ENCODE measurements at regions of chr14 and their contacts with region 1.

Region 1: GRCh38 chr14:21978184-21978998 is 304.8 kb upstream of the OR4E1 start:
- DNase-seq: peak; percentile 41
- H3K4me3 ChIP-seq: no peak overlapping the region
- H3K27ac ChIP-seq: no peak overlapping the region
- H3K4me1 ChIP-seq: no peaks in the 10 kb centered on the region
- H3K27me3 ChIP-seq: peaks cover 7 to 10% of the 10 kb centered on the region in 2 experiments
- CTCF ChIP-seq: peak; percentile 78 to 87
- POLR2A ChIP-seq: no peak

Region 2: GRCh38 chr14:21668377-21668776 is 310.0 kb before region 1 on chr14:
- CTCF ChIA-PET with region 1: no interaction called
- POLR2A ChIA-PET with region 1: no interaction called
- dilution Hi-C with region 1: no loop called
- intact Hi-C with region 1: no loop called
- DNase-seq: peak; percentile 64
- H3K4me3 ChIP-seq: no peak overlapping the region
- H3K27ac ChIP-seq: peak overlapping the region; percentile 13
- H3K4me1 ChIP-seq: peaks cover 10% of the 10 kb centered on the region
- H3K27me3 ChIP-seq: no peaks in the 10 kb centered on the region
- CTCF ChIP-seq: no peak
- POLR2A ChIP-seq: no peak

Region 3: GRCh38 chr14:21860172-21860571 is 118.2 kb before region 1 on chr14:
- CTCF ChIA-PET with region 1: interaction called, 16 read pairs
- POLR2A ChIA-PET with region 1: no interaction called
- dilution Hi-C with region 1: no loop called
- intact Hi-C with region 1: no loop called
- DNase-seq: peak; percentile 58
- H3K4me3 ChIP-seq: no peak overlapping the region
- H3K27ac ChIP-seq: no peak overlapping the region
- H3K4me1 ChIP-seq: no peaks in the 10 kb centered on the region
- H3K27me3 ChIP-seq: peaks cover 11 to 12% of the 10 kb centered on the region in 2 experiments
- CTCF ChIP-seq: peak; percentile 48 to 61
- POLR2A ChIP-seq: no peak

Region 4: GRCh38 chr14:21924479-21924878 is 53.9 kb before region 1 on chr14:
- CTCF ChIA-PET with region 1: interaction called, 74 read pairs
- POLR2A ChIA-PET with region 1: no interaction called
- dilution Hi-C with region 1: no loop called
- intact Hi-C with region 1: loop called (anchors 2 kb)
- DNase-seq: peak; percentile 43
- H3K4me3 ChIP-seq: no peak overlapping the region
- H3K27ac ChIP-seq: peak overlapping the region; percentile 84
- H3K4me1 ChIP-seq: peaks cover 18% of the 10 kb centered on the region
- H3K27me3 ChIP-seq: no peaks in the 10 kb centered on the region
- CTCF ChIP-seq: no peak
- POLR2A ChIP-seq: no peak

Region 5: GRCh38 chr14:21965042-21965441 is 13.3 kb before region 1 on chr14:
- CTCF ChIA-PET with region 1: interaction called, 24 read pairs
- POLR2A ChIA-PET with region 1: no interaction called
- dilution Hi-C with region 1: no loop called
- intact Hi-C with region 1: no loop called
- DNase-seq: no peak
- H3K4me3 ChIP-seq: no peak overlapping the region
- H3K27ac ChIP-seq: no peak overlapping the region
- H3K4me1 ChIP-seq: no peaks in the 10 kb centered on the region
- H3K27me3 ChIP-seq: peaks cover 8 to 12% of the 10 kb centered on the region in 2 experiments
- CTCF ChIP-seq: no peak
- POLR2A ChIP-seq: no peak

Region 6: GRCh38 chr14:22010545-22011252 is 32.3 kb after region 1 on chr14:
- CTCF ChIA-PET with region 1: interaction called, 11 read pairs
- POLR2A ChIA-PET with region 1: no interaction called
- dilution Hi-C with region 1: no loop called
- intact Hi-C with region 1: no loop called
- DNase-seq: no peak
- H3K4me3 ChIP-seq: no peak overlapping the region
- H3K27ac ChIP-seq: no peak overlapping the region
- H3K4me1 ChIP-seq: no peaks in the 10 kb centered on the region
- H3K27me3 ChIP-seq: peaks cover 2 to 11% of the 10 kb centered on the region in 2 experiments
- CTCF ChIP-seq: no peak
- POLR2A ChIP-seq: no peak

Region 7: DNA sequence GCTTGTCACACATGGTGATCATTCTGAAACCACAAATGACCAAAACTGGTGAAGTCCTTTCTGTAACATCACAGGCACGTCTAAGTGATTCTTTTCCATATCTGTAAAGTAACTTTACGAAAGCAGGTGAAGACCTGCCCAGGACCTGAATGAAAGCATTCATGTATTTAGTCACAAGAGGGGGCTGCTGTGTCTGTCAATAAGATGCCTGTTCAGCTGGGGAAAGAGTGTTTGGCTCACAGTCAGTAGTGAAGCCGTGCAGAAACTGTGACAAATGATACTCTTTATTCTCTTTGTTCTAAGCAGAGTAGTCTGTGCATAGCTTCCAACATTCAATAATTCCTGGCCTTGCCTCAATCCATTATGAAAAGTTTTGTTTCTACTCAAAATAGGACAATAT is 68.7 kb after region 1 on chr14:
- CTCF ChIA-PET with region 1: interaction called, 10 read pairs
- POLR2A ChIA-PET with region 1: no interaction called
- dilution Hi-C with region 1: no loop called
- intact Hi-C with region 1: no loop called
- DNase-seq: peak; percentile 34
- H3K4me3 ChIP-seq: no peak overlapping the region
- H3K27ac ChIP-seq: no peak overlapping the region
- H3K4me1 ChIP-seq: no peaks in the 10 kb centered on the region
- H3K27me3 ChIP-seq: peaks cover 3 to 17% of the 10 kb centered on the region in 2 experiments
- CTCF ChIP-seq: peak; percentile 30 to 41
- POLR2A ChIP-seq: no peak

Measured in endothelial cell of umbilical vein (primary cell).